A673 (cell line): ENCODE measurements at regions of chr4 and their contacts with region 1.

Region 1: GRCh38 chr4:7906171-7906701 is 33.4 kb downstream of the AFAP1 start:
- DNase-seq: no peak
- H3K4me3 ChIP-seq: no peak overlapping the region
- H3K27ac ChIP-seq: peak overlapping the region; percentile 76
- H3K4me1 ChIP-seq: peaks cover 93% of the 10 kb centered on the region
- H3K27me3 ChIP-seq: no peaks in the 10 kb centered on the region
- CTCF ChIP-seq: no peak

Region 2: GRCh38 chr4:7854697-7855370 is 51.4 kb before region 1 on chr4:
- CTCF ChIA-PET with region 1: no interaction called
- POLR2A ChIA-PET with region 1: interaction called, 10 read pairs
- intact Hi-C with region 1: no loop called
- DNase-seq: no peak
- H3K4me3 ChIP-seq: no peak overlapping the region
- H3K27ac ChIP-seq: peak overlapping the region; percentile 5
- H3K4me1 ChIP-seq: peaks cover 33% of the 10 kb centered on the region
- H3K27me3 ChIP-seq: no peaks in the 10 kb centered on the region
- CTCF ChIP-seq: no peak

Region 3: GRCh38 chr4:8015512-8015911 is 109.3 kb after region 1 on chr4:
- CTCF ChIA-PET with region 1: no interaction called
- POLR2A ChIA-PET with region 1: no interaction called
- intact Hi-C with region 1: no loop called
- DNase-seq: peak; percentile 53
- H3K4me3 ChIP-seq: peak overlapping the region; percentile 40
- H3K27ac ChIP-seq: peak overlapping the region; percentile 55
- H3K4me1 ChIP-seq: peaks cover 12% of the 10 kb centered on the region
- H3K27me3 ChIP-seq: no peaks in the 10 kb centered on the region
- CTCF ChIP-seq: peak; percentile 61